Lower leg skin (tissue), 4 donors: ENCODE measurements at regions of chr11 and their contacts with region 1.

Region 1: DNA sequence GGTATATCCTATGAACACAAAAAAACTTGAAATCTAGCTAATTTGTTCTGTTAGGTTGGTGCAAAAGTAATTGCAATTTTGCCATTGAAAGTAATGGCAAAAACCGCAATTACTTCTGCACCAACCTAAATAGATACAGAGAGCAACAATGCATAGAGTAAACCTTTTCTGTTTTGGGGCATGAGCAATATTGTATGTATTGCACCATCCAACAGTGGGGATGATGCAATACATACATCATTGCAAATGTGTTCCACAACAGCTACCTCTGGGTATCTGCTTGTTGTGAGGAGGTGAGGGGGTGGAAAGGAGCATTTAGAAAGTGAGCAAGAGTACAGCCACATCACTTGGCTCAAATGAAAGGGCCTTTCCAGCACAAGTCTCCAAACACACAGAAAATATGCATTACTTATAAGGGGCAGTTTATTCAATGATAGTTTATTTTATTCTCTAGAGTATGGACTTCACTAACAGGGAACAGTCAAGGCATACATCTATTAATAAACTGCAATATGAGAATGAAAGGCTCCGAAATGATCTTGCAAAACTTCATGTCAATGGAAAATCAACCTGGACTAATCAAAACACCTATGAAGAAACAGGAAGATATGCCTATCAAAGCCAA is 77.3 kb downstream of the DEUP1 start:
- DNase-seq: no peak
- H3K4me3 ChIP-seq: no peak overlapping the region
- CTCF ChIP-seq: no peak
- POLR2A ChIP-seq: no peak

Region 2: GRCh38 chr11:92580908-92581307 is 827.0 kb before region 1 on chr11:
- intact Hi-C with region 1: loop called (anchors 5 kb)
- DNase-seq: no peak
- H3K4me3 ChIP-seq: no peak overlapping the region
- CTCF ChIP-seq: no peak
- POLR2A ChIP-seq: no peak

Region 3: GRCh38 chr11:93188726-93189125 is 219.2 kb before region 1 on chr11:
- intact Hi-C with region 1: no loop called
- DNase-seq: no peak
- H3K4me3 ChIP-seq: no peak overlapping the region
- CTCF ChIP-seq: no peak
- POLR2A ChIP-seq: no peak

Region 4: DNA sequence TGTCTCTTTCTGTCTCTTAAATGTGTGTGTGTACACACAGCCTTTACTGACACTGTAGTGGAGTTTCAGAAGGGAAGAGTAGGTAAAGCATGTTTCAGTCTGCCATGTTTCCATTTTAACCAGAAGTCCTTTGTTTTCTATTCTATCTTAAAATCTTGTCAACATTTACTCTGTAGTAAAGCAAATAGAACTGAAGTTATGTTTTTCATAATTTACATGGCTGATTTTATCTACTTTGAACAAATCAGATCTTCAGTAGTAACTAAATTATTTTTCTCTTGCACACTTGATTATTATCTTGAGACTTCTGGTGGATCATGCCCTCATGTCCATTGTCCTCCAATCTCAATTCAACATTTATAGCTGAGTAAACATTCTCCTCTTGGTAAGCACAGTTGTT is 90.8 kb before region 1 on chr11:
- intact Hi-C with region 1: no loop called
- DNase-seq: no peak
- H3K4me3 ChIP-seq: no peak overlapping the region
- CTCF ChIP-seq: no peak
- POLR2A ChIP-seq: no peak

Region 5: DNA sequence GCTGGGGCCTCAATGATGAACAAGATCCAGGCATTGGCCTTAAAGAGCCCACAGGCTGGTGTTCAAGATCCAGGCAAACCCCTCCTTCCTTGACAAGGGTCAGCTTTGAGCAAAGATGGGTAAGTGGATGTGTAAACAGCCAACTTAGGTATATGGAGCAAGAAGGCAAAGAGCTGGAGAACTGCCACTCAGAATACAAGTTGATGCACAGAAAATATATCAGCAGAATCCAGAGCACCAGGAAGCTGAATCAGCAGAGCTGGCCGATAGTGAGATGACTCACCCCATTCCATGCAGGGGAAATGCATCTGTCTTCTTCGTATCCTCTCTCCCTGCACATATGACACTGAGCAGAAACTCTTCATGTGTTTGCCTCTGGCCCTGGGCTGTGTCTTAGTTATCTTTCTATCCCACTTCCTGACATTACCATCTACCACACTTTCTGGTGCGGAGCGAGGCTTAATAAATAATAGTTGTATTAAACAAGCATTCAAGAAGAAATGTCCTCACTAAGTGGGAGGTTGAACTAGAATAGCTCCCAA is 1739.5 kb after region 1 on chr11:
- intact Hi-C with region 1: no loop called
- DNase-seq: peak in 1 of 2 donors; percentile 52
- H3K4me3 ChIP-seq: no peak overlapping the region
- CTCF ChIP-seq: no peak
- POLR2A ChIP-seq: no peak